GM10248 (cell line): ENCODE measurements at regions of chr20 and their contacts with region 1.

Region 1: GRCh38 chr20:8315639-8316573 is 183.8 kb downstream of the PLCB1 start:
- DNase-seq: no peak
- CTCF ChIP-seq: no peak

Region 2: GRCh38 chr20:8299921-8300320 is 16.0 kb before region 1 on chr20:
- CTCF ChIA-PET with region 1: interaction called, 24 read pairs
- POLR2A ChIA-PET with region 1: no interaction called
- DNase-seq: no peak
- CTCF ChIP-seq: no peak

Region 3: DNA sequence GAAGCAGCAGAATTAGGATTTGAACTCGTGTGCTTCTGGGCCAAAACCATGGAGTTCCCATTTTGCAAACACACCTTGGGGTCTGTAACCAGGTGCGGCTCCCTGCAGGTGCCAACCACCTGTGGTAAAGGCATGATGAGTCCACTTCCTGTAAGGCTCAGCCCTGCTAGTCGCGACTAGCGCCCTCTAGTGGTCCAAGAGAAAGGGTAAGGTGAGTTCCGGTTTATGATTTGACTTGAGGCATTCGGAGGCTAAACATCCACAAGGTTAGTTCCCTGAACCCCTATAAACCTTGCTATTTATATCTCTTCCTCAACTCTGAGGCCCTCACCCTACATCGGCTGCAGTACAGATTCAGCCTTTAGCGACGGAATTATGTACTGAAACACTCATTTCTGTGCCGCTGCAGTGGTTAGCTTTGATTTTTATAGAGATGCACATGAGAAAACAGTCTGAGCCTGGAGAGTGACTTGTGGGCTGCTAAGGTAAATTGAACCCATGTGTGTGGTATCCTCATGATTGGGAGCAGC is 10.4 kb before region 1 on chr20:
- CTCF ChIA-PET with region 1: interaction called, 24 read pairs
- POLR2A ChIA-PET with region 1: no interaction called
- DNase-seq: peak; percentile 43
- CTCF ChIP-seq: peak; percentile 69